ENCODE measurements at regions of chr10 and their contacts with region 1.

Region 1: GRCh38 chr10:103918053-103918846 is at the start of gene STN1:
- DNase-seq: peak; percentile 97 to 99
- ATAC-seq: peak; percentile 97 to 99 (median 98)
- H3K4me3 ChIP-seq: peak within 1 kb of the TSS; percentile 48 to 88 (median 79)
- H3K27ac ChIP-seq: peak within 1 kb of the TSS; percentile 92 to 99 (median 96)
- H3K4me1 ChIP-seq: peaks cover 10 to 51% (median 34%) of the 10 kb centered on the region in 9 donors
- H3K27me3 ChIP-seq: no peaks in the 10 kb centered on the region
- CTCF ChIP-seq: peak in 3 of 9 donors; percentile 5 to 13 (median 10)
- total RNA-seq, gene STN1: 24.7 to 38.7 (median 31.4) TPM

Region 2: DNA sequence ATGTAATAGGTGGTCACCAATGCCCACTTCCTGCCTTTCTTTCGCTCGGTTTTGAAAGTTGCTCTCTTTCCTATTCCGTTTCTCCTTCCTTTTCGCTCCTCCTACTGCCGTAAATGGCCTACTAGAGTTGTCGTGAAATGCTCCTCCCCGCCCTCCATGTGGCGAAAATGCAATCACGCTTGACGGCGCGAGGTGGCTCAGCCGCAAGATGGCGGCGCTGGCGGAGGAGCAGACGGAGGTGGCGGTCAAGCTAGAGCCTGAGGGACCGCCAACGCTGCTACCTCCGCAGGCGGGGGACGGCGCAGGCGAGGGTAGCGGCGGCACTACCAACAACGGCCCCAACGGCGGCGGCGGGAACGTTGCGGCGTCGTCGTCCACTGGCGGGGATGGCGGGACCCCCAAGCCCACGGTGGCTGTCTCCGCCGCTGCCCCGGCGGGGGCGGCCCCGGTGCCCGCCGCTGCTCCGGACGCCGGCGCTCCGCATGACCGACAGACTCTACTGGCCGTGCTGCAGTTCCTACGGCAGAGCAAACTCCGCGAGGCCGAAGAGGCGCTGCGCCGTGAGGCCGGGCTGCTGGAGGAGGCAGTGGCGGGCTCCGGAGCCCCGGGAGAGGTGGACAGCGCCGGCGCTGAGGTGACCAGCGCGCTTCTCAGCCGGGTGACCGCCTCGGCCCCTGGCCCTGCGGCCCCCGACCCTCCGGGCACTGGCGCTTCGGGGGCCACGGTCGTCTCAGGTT is 550.3 kb before region 1 on chr10 and contains the start of gene TAF5:
- intact Hi-C with region 1: no loop called
- DNase-seq: peak; percentile 89 to 95
- ATAC-seq: peak; percentile 81 to 93 (median 87)
- H3K4me3 ChIP-seq: peak within 1 kb of the TSS; percentile 82 to 98 (median 91)
- H3K27ac ChIP-seq: peak within 1 kb of the TSS; percentile 65 to 93 (median 90)
- H3K4me1 ChIP-seq: peaks cover 0 to 24% (median 13%) of the 10 kb centered on the region in 9 donors
- H3K27me3 ChIP-seq: no peaks in the 10 kb centered on the region
- CTCF ChIP-seq: peak in 2 of 9 donors; percentile 11 to 13
- total RNA-seq, gene TAF5: 1.5 to 3.8 (median 2.1) TPM

Region 3: GRCh38 chr10:103960103-103960502 is 41.9 kb after region 1 on chr10:
- intact Hi-C with region 1: loop called in 5 of 10 experiments (anchors 5 kb)
- DNase-seq: no peak
- ATAC-seq: no peak
- H3K4me3 ChIP-seq: no peak overlapping the region
- H3K27ac ChIP-seq: no peak overlapping the region
- H3K4me1 ChIP-seq: peaks cover 0 to 5% (median 0%) of the 10 kb centered on the region in 9 donors
- H3K27me3 ChIP-seq: no peaks in the 10 kb centered on the region
- CTCF ChIP-seq: no peak

Region 4: DNA sequence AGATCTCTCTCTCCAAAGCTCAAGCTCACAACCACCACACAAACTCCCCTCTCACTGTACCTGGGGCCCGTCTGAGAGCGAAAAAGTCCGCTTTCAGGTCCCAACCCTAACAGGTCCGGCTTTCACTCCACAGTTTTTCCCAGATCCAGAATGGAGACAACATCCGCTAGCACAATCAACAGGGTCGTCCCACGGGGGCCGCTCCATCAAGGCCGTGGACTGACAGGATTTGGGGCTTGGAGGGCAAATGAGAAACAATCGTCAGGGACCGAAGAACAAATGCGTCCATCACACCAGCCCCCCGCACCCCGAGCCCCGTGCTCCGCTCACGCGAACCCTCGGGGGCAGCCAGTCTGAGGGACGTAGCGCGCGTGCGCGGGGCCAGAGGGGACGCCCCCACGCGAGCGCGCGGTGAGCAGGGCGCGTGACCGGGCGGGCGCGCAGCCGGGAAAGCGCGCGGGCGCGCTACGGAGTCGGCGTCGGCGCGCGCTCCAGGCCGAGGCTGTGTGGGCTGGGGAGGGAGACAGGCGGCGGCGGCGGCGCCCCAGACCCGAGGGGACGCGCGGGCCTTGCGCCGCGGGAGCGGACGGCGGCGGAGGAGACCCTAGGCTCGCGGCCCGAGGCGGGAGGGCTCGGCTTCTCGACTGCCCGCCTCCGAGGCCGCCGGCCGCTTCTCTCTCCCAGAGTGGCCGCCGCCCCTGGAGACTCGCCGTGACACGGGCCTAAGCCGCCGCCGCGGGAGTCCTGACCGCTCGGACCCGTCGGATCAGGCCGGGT is 48.6 kb after region 1 on chr10 and contains the start of gene SLK:
- intact Hi-C with region 1: loop called in 9 of 10 experiments (anchors 1 to 5 kb)
- DNase-seq: peak; percentile 83 to 89
- ATAC-seq: peak; percentile 95 to 99 (median 96)
- H3K4me3 ChIP-seq: peak within 1 kb of the TSS; percentile 69 to 95 (median 86)
- H3K27ac ChIP-seq: peak within 1 kb of the TSS; percentile 89 to 99 (median 97)
- H3K4me1 ChIP-seq: peaks cover 0 to 47% (median 31%) of the 10 kb centered on the region in 9 donors
- H3K27me3 ChIP-seq: no peaks in the 10 kb centered on the region
- CTCF ChIP-seq: no peak
- total RNA-seq, gene SLK: 30.4 to 63.6 (median 44.2) TPM

Region 5: GRCh38 chr10:104170610-104171254 is 252.5 kb after region 1 on chr10:
- intact Hi-C with region 1: no loop called
- DNase-seq: no peak
- ATAC-seq: no peak
- H3K4me3 ChIP-seq: no peak overlapping the region
- H3K27ac ChIP-seq: no peak overlapping the region
- H3K4me1 ChIP-seq: no peaks in the 10 kb centered on the region
- H3K27me3 ChIP-seq: peaks cover 0 to 9% (median 0%) of the 10 kb centered on the region in 7 donors
- CTCF ChIP-seq: no peak